ENCODE measurements at regions of chr1 and their contacts with region 1.

Region 1: GRCh38 chr1:59903141-59903754 is 23.3 kb downstream of the CYP2J2 start:
- DNase-seq: no peak
- ATAC-seq: peak in 3 of 8 donors; percentile 41
- H3K4me3 ChIP-seq: no peak overlapping the region
- H3K27ac ChIP-seq: peak overlapping the region in 3 of 10 donors; percentile 39 to 56 (median 53)
- H3K4me1 ChIP-seq: peaks cover 0 to 58% (median 12%) of the 10 kb centered on the region in 9 donors
- H3K27me3 ChIP-seq: peaks cover 0 to 2% (median 0%) of the 10 kb centered on the region in 7 donors
- CTCF ChIP-seq: peak in 6 of 9 donors; percentile 16 to 43 (median 34)

Region 2: DNA sequence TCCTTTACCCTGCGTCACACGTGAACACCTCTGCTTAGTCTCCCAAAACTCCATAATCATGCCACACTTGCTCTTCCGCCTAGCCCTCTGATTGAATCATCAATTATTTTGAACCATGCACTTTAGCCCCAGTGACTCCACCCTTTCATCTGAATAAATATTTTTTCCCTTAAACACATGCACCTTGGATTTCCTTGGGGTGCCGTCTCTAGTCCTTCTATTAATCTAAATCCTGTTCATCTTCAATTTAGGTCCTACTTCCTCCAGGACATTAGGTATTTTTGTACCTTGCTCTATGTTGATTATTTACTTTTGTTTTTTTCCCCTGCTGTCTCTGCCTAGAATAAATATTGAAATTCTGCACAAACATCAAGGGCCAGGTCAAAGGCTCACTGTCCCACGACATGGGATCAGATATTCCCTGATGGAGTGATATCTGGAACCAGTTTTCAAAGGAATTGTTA is 33.1 kb after region 1 on chr1:
- intact Hi-C with region 1: loop called in 1 of 10 experiments (anchors 5 kb)
- DNase-seq: no peak
- ATAC-seq: no peak
- H3K4me3 ChIP-seq: no peak overlapping the region
- H3K27ac ChIP-seq: no peak overlapping the region
- H3K4me1 ChIP-seq: no peaks in the 10 kb centered on the region
- H3K27me3 ChIP-seq: peaks cover 0 to 4% (median 0%) of the 10 kb centered on the region in 7 donors
- CTCF ChIP-seq: no peak